PC-9 (cell line): ENCODE measurements at regions of chr3 and their contacts with region 1.

Region 1: DNA sequence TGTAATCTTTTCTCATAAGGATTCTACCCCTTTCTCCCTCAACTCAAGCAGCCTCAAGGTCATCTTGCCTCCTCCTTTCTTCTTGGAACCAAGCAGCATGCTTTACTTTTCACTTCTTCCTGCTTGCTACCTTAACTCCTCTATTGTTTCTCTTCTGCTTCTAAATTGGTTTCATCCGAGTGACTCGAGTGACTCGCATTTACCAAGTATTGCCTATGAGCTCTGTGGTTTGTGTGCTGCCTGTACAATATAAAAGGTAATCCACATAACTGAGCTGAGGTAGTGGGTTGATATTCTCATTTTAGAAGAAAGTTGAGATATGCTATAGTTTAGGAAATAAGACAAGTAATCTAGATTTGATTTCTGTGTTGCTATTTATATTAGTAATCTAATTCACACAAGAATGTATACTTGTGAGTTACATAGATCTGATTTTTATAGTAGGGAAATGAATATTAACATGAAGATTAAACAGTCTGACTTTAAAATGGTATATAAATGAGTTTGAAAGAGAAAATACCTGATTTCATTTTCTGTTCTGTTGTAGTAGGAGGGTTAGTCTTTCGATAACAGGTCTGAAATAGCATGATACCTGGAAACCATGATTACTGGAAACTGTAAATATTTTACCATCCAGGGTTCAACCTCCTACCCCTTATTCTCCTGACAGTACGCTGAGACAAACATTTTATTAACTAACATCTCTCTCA is 5.5 kb downstream of the HHLA2 start:
- DNase-seq: peak in 1 of 2 experiments; percentile 46
- H3K4me3 ChIP-seq: no peak overlapping the region
- H3K27ac ChIP-seq: no peak overlapping the region
- H3K4me1 ChIP-seq: no peaks in the 10 kb centered on the region; the same call in 1 of the 2 replicates
- H3K27me3 ChIP-seq: no peaks in the 10 kb centered on the region
- CTCF ChIP-seq: no peak

Region 2: GRCh38 chr3:108153451-108153981 is 148.3 kb before region 1 on chr3:
- CTCF ChIA-PET with region 1: no interaction called
- POLR2A ChIA-PET with region 1: no interaction called
- intact Hi-C with region 1: loop called (anchors 10 kb)
- DNase-seq: peak; percentile 54 to 75
- H3K4me3 ChIP-seq: no peak overlapping the region
- H3K27ac ChIP-seq: no peak overlapping the region
- H3K4me1 ChIP-seq: no peaks in the 10 kb centered on the region; the same call in 1 of the 2 replicates
- H3K27me3 ChIP-seq: no peaks in the 10 kb centered on the region
- CTCF ChIP-seq: peak; percentile 59

Region 3: DNA sequence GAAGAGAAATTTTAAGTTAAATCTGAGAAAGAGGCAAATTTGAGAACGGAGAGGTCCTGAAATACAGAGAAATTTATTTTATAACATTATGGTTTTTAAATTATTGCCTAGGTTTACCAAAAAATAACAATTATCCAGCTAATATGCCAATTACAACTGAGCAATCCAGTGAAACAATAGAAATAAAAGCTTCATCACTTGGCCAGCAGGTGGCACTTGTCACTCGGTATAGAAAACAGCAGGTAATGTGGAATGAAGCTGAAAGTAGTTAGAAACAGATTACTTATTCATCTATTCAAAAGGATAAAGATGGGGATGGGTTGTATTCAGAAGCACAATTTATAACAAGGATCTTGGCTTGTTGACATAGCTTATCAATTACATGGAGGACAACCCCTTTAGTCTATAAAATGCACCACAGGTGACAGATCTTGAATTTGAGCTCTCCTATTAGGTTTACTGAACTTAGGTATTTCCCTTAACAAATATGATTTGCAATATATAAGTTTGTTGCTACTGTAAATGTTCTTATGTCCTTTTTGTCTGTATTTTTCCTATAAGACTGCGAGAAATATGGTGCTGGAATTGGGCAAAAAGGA is 721.9 kb after region 1 on chr3:
- CTCF ChIA-PET with region 1: no interaction called
- POLR2A ChIA-PET with region 1: no interaction called
- intact Hi-C with region 1: no loop called
- DNase-seq: peak in 1 of 2 experiments; percentile 37
- H3K4me3 ChIP-seq: no peak overlapping the region
- H3K27ac ChIP-seq: no peak overlapping the region
- H3K4me1 ChIP-seq: no peaks in the 10 kb centered on the region
- H3K27me3 ChIP-seq: no peaks in the 10 kb centered on the region
- CTCF ChIP-seq: peak; percentile 94